SK-N-SH (cell line): ENCODE measurements at regions of chr5 and their contacts with region 1.

Region 1: GRCh38 chr5:95781101-95781583 is 41.4 kb downstream of the GLRX start:
- DNase-seq: peak; percentile 68
- H3K4me3 ChIP-seq: peak overlapping the region in 1 of 2 experiments; percentile 17; a peak in 1 of 4 replicates
- H3K27ac ChIP-seq: no peak overlapping the region
- H3K4me1 ChIP-seq: peaks cover 4 to 7% of the 10 kb centered on the region in 2 experiments; a peak in 2 of 4 replicates
- H3K27me3 ChIP-seq: no peaks in the 10 kb centered on the region
- CTCF ChIP-seq: peak; percentile 99
- EP300 ChIP-seq: no peak
- RAD21 ChIP-seq: peak; percentile 84

Region 2: GRCh38 chr5:95511606-95512005 is 269.5 kb before region 1 on chr5:
- CTCF ChIA-PET with region 1: no interaction called
- POLR2A ChIA-PET with region 1: no interaction called
- DNase-seq: no peak
- H3K4me3 ChIP-seq: no peak overlapping the region
- H3K27ac ChIP-seq: no peak overlapping the region
- H3K4me1 ChIP-seq: no peaks in the 10 kb centered on the region
- H3K27me3 ChIP-seq: no peaks in the 10 kb centered on the region
- CTCF ChIP-seq: no peak
- EP300 ChIP-seq: no peak
- RAD21 ChIP-seq: no peak

Region 3: DNA sequence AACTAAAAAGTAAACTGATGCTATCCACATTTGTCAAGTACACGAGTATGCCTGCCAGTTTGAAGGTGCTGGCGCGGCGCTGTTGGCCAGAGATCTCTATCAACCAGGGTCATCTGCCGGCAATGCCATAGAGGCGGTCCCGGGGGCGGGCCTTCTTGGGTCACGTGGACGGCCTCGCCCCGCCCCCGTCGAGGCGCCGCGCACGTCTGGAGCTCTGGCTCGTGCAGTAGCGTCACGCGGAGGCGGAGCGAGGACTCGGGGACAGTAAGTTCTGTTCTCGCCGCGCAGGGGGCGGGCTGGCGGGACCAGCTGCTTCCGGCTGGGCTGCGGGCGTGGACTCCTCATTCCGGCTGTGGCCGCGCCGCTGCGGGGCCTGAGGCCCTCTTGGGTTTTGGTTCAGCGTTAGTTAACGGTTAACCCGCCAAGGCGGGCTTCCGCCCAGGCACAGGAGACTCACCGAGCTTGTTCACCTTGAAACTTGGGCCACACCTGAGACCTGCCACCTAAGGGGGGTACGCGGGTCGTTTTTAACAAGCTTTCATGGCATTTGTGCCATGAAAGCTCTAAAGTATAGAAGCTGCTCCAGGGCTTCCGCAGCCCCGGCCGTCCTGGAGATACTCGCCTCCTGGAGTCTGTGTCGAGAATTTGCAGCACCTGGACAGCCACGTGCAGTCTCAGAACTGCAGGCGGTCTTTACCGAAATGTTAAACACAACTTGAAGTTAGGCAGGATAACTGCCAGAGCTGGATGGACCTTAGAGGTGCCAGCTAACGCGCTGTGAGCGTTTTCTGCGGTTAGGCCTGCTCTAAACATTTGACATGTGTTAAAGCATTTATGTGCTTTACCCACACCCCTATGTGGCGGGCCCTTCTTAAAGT is 134.3 kb before region 1 on chr5 and contains the start of gene RFESD:
- CTCF ChIA-PET with region 1: interaction called, 39 read pairs
- POLR2A ChIA-PET with region 1: no interaction called
- DNase-seq: peak; percentile 94
- H3K4me3 ChIP-seq: peak within 1 kb of the TSS; percentile 59 to 66
- H3K27ac ChIP-seq: peak within 1 kb of the TSS; percentile 64 to 89
- H3K4me1 ChIP-seq: peaks cover 0 to 6% of the 10 kb centered on the region in 2 experiments; a peak in 2 of 4 replicates
- H3K27me3 ChIP-seq: no peaks in the 10 kb centered on the region
- CTCF ChIP-seq: no peak
- EP300 ChIP-seq: peak; percentile 28 to 35; a peak in 2 of 4 replicates
- RAD21 ChIP-seq: no peak
- polyA plus RNA-seq, gene RFESD: 1.8 and 3.1 TPM in 2 replicates

Region 4: DNA sequence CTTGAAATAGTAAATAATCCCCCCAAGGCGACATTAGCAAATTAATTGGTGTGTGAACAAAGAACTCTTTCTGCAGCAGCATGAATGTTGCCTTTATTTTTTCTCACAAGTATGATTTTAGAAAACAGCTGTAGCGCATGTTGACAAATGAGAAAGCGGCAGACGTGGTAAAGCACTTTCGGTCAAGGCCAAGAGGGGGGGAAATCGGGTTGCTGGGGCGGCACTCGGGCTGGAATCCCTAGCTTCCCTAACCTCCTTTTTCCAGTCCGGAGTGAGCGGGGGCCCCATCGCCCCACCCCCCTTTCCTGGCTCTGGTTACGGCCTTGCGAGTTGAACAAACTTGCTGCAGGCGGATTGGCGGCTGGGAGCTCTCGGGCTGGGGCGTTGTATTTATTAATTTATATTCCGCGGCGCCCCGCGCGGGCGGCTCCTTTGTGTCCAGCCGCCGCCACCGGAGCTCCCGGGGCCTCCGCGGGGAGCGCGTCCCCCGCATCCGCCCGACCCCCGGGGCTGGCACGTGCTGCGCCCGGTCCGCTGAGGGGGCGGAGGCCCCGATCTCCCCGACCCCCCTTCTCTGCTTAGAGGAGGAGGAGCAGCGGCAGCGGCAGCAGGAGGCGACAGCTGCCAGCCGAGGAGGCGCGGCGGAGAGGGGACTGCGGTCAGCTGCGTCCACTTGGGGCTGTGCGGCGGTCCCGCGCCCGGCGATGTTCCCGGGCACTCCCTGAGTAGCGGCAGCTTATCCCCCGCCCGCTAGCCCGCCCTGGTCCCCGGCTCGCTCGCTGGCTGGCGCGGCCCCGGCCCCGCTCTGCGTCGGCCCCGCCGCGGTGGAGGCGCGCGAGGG is 50.2 kb before region 1 on chr5 and contains the start of gene RHOBTB3:
- CTCF ChIA-PET with region 1: interaction called, 11 read pairs
- POLR2A ChIA-PET with region 1: no interaction called
- DNase-seq: peak; percentile 91
- H3K4me3 ChIP-seq: peak within 1 kb of the TSS; percentile 80 to 98
- H3K27ac ChIP-seq: peak within 1 kb of the TSS; percentile 77 to 97
- H3K4me1 ChIP-seq: peaks cover 22 to 38% of the 10 kb centered on the region in 2 experiments; a peak in 3 of 4 replicates
- H3K27me3 ChIP-seq: no peaks in the 10 kb centered on the region
- CTCF ChIP-seq: no peak
- EP300 ChIP-seq: no peak; a peak in 1 of 4 replicates
- RAD21 ChIP-seq: peak; percentile 23; the same call in 1 of the 2 replicates
- polyA plus RNA-seq, gene RHOBTB3: 59.3 and 73.6 TPM in 2 replicates

Region 5: DNA sequence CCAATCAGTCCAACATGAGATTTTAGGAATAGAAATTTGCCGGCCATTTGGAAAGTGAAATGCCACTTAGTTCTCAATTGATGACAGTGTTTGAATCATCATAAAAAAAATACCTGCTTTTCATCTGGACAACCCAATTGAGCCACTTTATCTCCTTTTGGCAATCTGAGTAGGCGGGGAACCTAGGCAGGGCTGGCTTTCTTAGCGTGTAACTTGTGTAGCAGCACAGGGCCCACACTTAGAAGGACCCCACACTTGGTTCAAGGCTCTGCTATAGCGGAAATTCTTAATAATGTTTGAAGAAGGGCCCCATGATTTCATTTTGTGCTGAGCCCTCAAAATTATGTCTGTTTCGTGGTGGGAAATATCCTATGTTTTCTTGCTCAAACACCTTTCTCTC is 12.5 kb after region 1 on chr5:
- CTCF ChIA-PET with region 1: interaction called, 30 read pairs
- POLR2A ChIA-PET with region 1: no interaction called
- DNase-seq: no peak
- H3K4me3 ChIP-seq: no peak overlapping the region
- H3K27ac ChIP-seq: peak overlapping the region; percentile 21 to 43; a peak in 3 of 4 replicates
- H3K4me1 ChIP-seq: peaks cover 0 to 9% of the 10 kb centered on the region in 2 experiments; a peak in 1 of 4 replicates
- H3K27me3 ChIP-seq: no peaks in the 10 kb centered on the region
- CTCF ChIP-seq: no peak
- EP300 ChIP-seq: no peak
- RAD21 ChIP-seq: no peak

Region 6: GRCh38 chr5:95817440-95817839 is 36.3 kb after region 1 on chr5:
- CTCF ChIA-PET with region 1: interaction called, 28 read pairs
- POLR2A ChIA-PET with region 1: no interaction called
- DNase-seq: no peak
- H3K4me3 ChIP-seq: no peak overlapping the region
- H3K27ac ChIP-seq: no peak overlapping the region
- H3K4me1 ChIP-seq: peaks cover 6 to 7% of the 10 kb centered on the region in 2 experiments; a peak in 3 of 4 replicates
- H3K27me3 ChIP-seq: no peaks in the 10 kb centered on the region
- CTCF ChIP-seq: no peak
- EP300 ChIP-seq: no peak
- RAD21 ChIP-seq: no peak

Region 7: GRCh38 chr5:95835682-95836385 is 54.7 kb after region 1 on chr5:
- CTCF ChIA-PET with region 1: interaction called, 17 read pairs
- POLR2A ChIA-PET with region 1: no interaction called
- DNase-seq: no peak
- H3K4me3 ChIP-seq: no peak overlapping the region
- H3K27ac ChIP-seq: no peak overlapping the region
- H3K4me1 ChIP-seq: peaks cover 0 to 9% of the 10 kb centered on the region in 2 experiments; a peak in 1 of 4 replicates
- H3K27me3 ChIP-seq: no peaks in the 10 kb centered on the region
- CTCF ChIP-seq: no peak
- EP300 ChIP-seq: no peak
- RAD21 ChIP-seq: no peak

Region 8: GRCh38 chr5:95858661-95859326 is 77.7 kb after region 1 on chr5:
- CTCF ChIA-PET with region 1: interaction called, 170 read pairs
- POLR2A ChIA-PET with region 1: no interaction called
- DNase-seq: peak; percentile 93
- H3K4me3 ChIP-seq: peak overlapping the region; percentile 36 to 45
- H3K27ac ChIP-seq: peak overlapping the region; percentile 71 to 95
- H3K4me1 ChIP-seq: peaks cover 2 to 35% of the 10 kb centered on the region in 2 experiments; a peak in 3 of 4 replicates
- H3K27me3 ChIP-seq: no peaks in the 10 kb centered on the region
- CTCF ChIP-seq: peak; percentile 98
- EP300 ChIP-seq: peak in 1 of 2 experiments; percentile 80; a peak in 1 of 4 replicates
- RAD21 ChIP-seq: peak; percentile 97